Transverse colon (tissue), 4 donors: ENCODE measurements at regions of chr10 and their contacts with region 1.

Region 1: DNA sequence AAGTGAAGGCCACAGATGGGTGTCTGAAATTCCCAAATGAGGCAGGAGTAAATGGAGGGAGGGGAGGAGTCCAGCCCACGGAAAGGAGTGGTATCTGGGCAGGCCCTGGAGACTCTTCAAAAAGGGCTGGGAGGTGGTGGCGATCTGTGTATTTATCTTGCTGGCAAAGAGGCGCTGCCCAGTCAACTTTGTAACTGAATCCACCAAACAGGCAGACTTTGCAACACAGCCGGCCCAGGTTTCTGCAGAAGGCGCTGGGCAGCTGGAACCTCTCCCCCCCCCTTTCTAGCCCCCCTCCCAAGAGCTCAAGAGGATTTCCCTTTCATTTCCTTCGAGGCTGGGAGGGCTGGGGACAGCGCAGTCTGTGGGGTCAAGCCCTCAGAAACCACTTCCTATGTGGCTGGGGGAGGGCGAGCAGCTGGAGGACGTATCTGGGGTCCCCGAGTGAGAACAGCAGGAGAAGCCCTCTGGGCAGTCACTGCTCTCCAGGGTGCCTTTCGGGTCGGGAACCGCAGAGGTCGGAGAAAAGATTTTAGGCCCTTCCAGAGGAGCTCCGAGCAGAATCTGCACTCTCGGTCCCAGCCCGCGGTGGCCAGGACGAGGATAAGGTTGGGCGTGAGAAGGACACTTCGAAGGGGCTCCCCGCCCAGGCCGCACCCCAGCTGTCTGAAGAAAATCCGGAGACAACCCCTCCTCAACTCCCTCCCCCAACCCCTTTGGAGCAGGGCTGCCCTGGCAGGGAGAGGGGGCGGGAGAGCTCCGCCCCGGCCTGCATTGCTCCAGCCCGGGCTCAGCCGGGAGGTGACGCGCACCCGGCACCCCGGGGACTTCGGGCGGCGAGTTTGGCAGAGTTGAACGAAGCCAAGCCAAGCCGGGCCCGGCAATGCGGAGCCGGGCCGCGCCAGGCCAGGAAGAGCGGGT is 965 bp downstream of the ZCCHC24 start:
- DNase-seq: peak; percentile 56
- H3K4me3 ChIP-seq: peak overlapping the region; percentile 66 to 80 (median 72)
- H3K27ac ChIP-seq: peak overlapping the region; percentile 86 to 97 (median 94)
- H3K4me1 ChIP-seq: peaks cover 4 to 58% (median 38%) of the 10 kb centered on the region in 4 donors
- H3K27me3 ChIP-seq: no peaks in the 10 kb centered on the region
- CTCF ChIP-seq: no peak
- EP300 ChIP-seq: no peak
- POLR2A ChIP-seq: peak; percentile 16

Region 2: GRCh38 chr10:79407811-79408795 is 36.4 kb before region 1 on chr10:
- in situ Hi-C with region 1: no loop called
- intact Hi-C with region 1: loop called (anchors 5 kb)
- DNase-seq: peak; percentile 51
- H3K4me3 ChIP-seq: no peak overlapping the region
- H3K27ac ChIP-seq: no peak overlapping the region
- H3K4me1 ChIP-seq: peaks cover 56 to 76% (median 69%) of the 10 kb centered on the region in 4 donors
- H3K27me3 ChIP-seq: no peaks in the 10 kb centered on the region
- CTCF ChIP-seq: no peak
- EP300 ChIP-seq: no peak
- POLR2A ChIP-seq: no peak